Gastrocnemius medialis (tissue), 4 donors: ENCODE measurements at regions of chr17 and their contacts with region 1.

Region 1: DNA sequence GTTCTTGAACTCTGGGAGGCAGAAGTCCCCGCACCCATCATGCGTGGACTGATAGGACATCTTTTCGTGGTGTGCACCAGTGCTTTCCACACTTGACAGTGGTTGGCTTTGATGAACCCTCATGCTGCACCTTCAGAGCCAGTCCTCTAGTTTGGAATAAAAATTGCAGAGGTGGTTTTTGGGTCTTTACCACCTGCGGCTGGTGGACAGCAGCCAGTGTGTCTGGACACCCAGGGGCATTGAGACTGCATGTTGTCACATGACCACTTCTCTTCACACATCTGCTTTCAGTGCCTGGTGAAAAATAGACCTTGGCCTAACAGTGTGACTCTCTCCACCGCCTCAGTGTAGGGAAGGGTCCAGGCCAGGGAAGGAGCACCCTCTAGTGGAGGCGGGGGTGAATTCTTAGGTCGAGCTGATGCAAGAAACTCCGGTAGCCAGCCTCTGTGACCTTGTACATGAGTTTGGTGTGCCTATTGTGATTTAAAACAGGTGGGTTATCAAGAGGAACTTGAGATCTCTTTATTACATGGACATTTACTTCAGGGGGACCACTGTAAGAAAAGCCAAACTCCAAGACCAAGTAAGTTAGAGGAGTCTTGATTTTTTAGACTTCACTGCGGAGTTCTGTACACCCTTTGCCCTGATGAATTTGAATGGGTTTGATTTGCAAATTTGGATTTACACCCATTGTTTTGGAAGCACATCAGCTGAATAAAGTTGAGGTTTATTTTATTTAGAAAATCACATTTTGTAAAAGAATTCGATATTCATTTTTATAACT is 17.9 kb downstream of the GOSR2 start:
- DNase-seq: peak; percentile 31 to 61
- ATAC-seq: peak; percentile 79 to 82
- H3K4me3 ChIP-seq: no peak overlapping the region
- H3K27ac ChIP-seq: no peak overlapping the region
- H3K4me1 ChIP-seq: peaks cover 9 to 11% of the 10 kb centered on the region in 2 donors
- H3K27me3 ChIP-seq: no peaks in the 10 kb centered on the region
- CTCF ChIP-seq: peak; percentile 42 to 78 (median 70)
- POLR2A ChIP-seq: no peak

Region 2: GRCh38 chr17:46847204-46848191 is 93.3 kb before region 1 on chr17:
- in situ Hi-C with region 1: no loop called
- intact Hi-C with region 1: loop called (anchors 2 kb)
- DNase-seq: no peak
- ATAC-seq: no peak
- H3K4me3 ChIP-seq: no peak overlapping the region
- H3K27ac ChIP-seq: no peak overlapping the region
- H3K4me1 ChIP-seq: peaks cover 4 to 7% of the 10 kb centered on the region in 2 donors
- H3K27me3 ChIP-seq: peaks cover 23 to 43% (median 43%) of the 10 kb centered on the region in 3 donors
- CTCF ChIP-seq: no peak
- POLR2A ChIP-seq: no peak

Region 3: DNA sequence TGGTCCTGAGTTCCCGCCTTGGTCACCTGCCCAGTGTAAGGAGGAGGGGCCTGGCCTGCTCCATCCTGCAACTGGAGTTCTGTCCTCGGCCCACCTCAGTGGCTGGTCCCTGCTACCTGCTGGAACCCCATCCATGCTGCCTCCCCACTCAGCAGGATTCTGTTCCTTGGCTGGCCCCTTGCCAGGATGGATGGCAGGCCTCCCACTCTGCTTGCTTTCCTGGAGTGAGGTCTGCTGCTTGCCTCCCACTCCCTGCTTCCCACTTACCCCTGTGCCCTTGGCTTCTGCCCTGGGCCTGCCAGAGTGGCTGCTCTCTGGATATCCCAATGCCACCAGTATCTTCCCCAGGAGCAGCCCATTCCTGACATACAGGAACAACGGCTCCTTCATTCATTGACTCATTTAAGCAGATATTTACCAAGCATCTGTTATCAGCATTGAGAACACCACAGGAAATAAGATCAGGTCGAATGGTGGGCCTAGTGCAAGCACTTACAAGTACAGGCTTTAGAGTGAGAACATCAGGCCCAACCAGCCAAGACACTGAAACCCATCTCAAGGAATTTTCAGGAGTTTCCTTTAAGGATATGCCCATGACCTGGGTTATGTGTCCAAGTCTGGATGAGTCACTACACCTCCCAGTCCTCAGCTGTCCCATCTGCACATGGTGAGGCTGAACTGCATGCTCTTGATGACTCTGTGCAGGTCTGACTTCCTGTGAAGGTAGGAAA is 55.2 kb after region 1 on chr17:
- in situ Hi-C with region 1: loop called in 1 of 4 experiments (anchors 5 kb)
- intact Hi-C with region 1: loop called (anchors 1 kb)
- DNase-seq: no peak
- ATAC-seq: no peak
- H3K4me3 ChIP-seq: no peak overlapping the region
- H3K27ac ChIP-seq: no peak overlapping the region
- H3K4me1 ChIP-seq: peaks cover 0 to 5% of the 10 kb centered on the region in 2 donors
- H3K27me3 ChIP-seq: no peaks in the 10 kb centered on the region
- CTCF ChIP-seq: no peak
- POLR2A ChIP-seq: no peak

Region 4: DNA sequence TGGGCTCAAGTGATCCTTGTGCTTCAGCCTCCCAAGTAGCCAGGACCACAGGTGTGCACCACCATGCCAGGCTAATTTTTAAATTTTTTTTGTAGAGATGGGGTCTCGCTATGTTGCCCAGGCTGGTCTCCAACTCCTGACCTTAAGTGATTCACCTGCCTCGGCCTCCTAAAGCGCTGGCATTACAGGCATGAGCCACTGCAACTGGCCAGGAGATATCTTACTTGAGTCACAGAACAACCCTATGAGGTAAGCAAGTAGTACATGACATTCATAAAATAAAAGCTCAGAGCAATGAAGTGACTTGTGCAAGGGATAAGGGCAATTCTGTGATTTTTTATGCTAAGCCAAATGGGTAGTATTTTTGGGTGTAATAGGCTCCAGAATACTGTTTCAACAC is 190.9 kb after region 1 on chr17:
- in situ Hi-C with region 1: loop called in 1 of 4 experiments (anchors 25 kb)
- intact Hi-C with region 1: no loop called
- DNase-seq: no peak
- ATAC-seq: no peak
- H3K4me3 ChIP-seq: no peak overlapping the region
- H3K27ac ChIP-seq: no peak overlapping the region
- H3K4me1 ChIP-seq: no peaks in the 10 kb centered on the region
- H3K27me3 ChIP-seq: no peaks in the 10 kb centered on the region
- CTCF ChIP-seq: no peak
- POLR2A ChIP-seq: no peak